Activated naive CD4-positive, alpha-beta T cell treated with anti-CD3 and anti-CD28 coated beads, Interleukin-2, amount 10 ng/mL, durations not matched to agents 7 days and 5 days (primary cell): ENCODE measurements at regions of chr3 and their contacts with region 1.

Region 1: GRCh38 chr3:37308247-37308646 is 133.9 kb upstream of the LRRFIP2 start:
- DNase-seq: no peak
- H3K4me3 Mint-ChIP-seq: no peak overlapping the region
- H3K27ac Mint-ChIP-seq: no peak overlapping the region
- H3K4me1 Mint-ChIP-seq: peaks cover 10% of the 10 kb centered on the region
- H3K27me3 Mint-ChIP-seq: no peaks in the 10 kb centered on the region

Region 2: GRCh38 chr3:37297459-37297858 is 10.8 kb before region 1 on chr3:
- CTCF ChIA-PET with region 1: interaction called, 12 read pairs
- DNase-seq: no peak
- H3K4me3 Mint-ChIP-seq: no peak overlapping the region
- H3K27ac Mint-ChIP-seq: no peak overlapping the region
- H3K4me1 Mint-ChIP-seq: peaks cover 10% of the 10 kb centered on the region
- H3K27me3 Mint-ChIP-seq: no peaks in the 10 kb centered on the region

Region 3: GRCh38 chr3:37492977-37493471 is 184.8 kb after region 1 on chr3:
- CTCF ChIA-PET with region 1: no interaction called
- DNase-seq: no peak
- H3K4me3 Mint-ChIP-seq: no peak overlapping the region
- H3K27ac Mint-ChIP-seq: no peak overlapping the region
- H3K4me1 Mint-ChIP-seq: no peaks in the 10 kb centered on the region
- H3K27me3 Mint-ChIP-seq: peaks cover 14% of the 10 kb centered on the region